Activated naive CD4-positive, alpha-beta T cell treated with anti-CD3 and anti-CD28 coated beads for 36 hours (primary cell): ENCODE measurements at regions of chr12 and their contacts with region 1.

Region 1: GRCh38 chr12:48988030-48988649 is 10.0 kb downstream of the WNT1 start:
- DNase-seq: peak; percentile 84
- H3K4me3 Mint-ChIP-seq: no peak overlapping the region
- H3K27ac Mint-ChIP-seq: no peak overlapping the region
- H3K4me1 Mint-ChIP-seq: no peaks in the 10 kb centered on the region
- H3K27me3 Mint-ChIP-seq: peaks cover 22% of the 10 kb centered on the region

Region 2: DNA sequence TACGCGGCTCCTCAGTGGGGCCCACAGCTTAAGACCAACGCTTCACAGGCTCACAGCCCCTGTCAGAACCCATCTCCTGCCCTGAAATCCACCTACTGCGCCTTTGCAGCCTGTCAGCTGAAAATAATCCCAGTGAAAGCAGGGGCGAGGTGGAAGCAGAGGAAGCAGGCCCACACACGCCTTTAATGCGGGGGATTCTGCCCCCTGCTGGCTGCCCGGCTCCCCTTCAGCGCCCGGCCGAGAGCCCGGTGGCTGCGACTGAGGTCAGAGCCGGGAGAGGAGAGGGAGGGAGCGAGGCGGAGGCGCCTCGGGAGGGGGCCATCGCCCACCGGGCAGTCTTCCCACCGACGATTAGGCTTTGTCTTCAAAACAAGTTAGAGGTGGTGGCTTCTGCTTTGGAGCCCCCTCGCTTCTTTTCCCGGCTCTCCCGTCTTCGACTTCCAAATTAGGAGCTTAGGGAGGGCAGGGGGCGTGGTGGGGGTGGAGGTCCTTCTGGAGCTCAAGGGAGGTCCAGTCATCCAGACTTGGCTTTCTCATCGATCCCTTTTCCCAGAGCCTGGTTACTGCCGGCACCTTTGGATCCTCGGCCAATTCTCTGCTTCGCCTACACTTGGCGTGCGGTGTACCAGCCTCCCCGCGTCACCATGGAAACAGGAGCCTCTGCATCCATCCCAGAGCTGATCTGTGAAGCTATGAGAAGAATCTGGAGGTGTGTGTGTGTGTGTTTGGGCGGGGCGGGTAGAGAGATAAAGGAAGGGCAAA is 97.3 kb before region 1 on chr12:
- CTCF ChIA-PET with region 1: interaction called, 27 read pairs
- intact Hi-C with region 1: no loop called
- DNase-seq: peak; percentile 86
- H3K4me3 Mint-ChIP-seq: peak overlapping the region; percentile 24
- H3K27ac Mint-ChIP-seq: no peak overlapping the region
- H3K4me1 Mint-ChIP-seq: peaks cover 5% of the 10 kb centered on the region
- H3K27me3 Mint-ChIP-seq: peaks cover 13% of the 10 kb centered on the region

Region 3: GRCh38 chr12:48924617-48925303 is 63.4 kb before region 1 on chr12:
- CTCF ChIA-PET with region 1: interaction called, 35 read pairs
- intact Hi-C with region 1: no loop called
- DNase-seq: peak; percentile 81
- H3K4me3 Mint-ChIP-seq: peak overlapping the region; percentile 91
- H3K27ac Mint-ChIP-seq: peak overlapping the region; percentile 96
- H3K4me1 Mint-ChIP-seq: peaks cover 49% of the 10 kb centered on the region
- H3K27me3 Mint-ChIP-seq: no peaks in the 10 kb centered on the region

Region 4: GRCh38 chr12:48946205-48946604 is 41.9 kb before region 1 on chr12:
- CTCF ChIA-PET with region 1: interaction called, 14 read pairs
- intact Hi-C with region 1: no loop called
- DNase-seq: no peak
- H3K4me3 Mint-ChIP-seq: no peak overlapping the region
- H3K27ac Mint-ChIP-seq: no peak overlapping the region
- H3K4me1 Mint-ChIP-seq: peaks cover 10% of the 10 kb centered on the region
- H3K27me3 Mint-ChIP-seq: no peaks in the 10 kb centered on the region

Region 5: GRCh38 chr12:48969833-48970701 is 18.1 kb before region 1 on chr12:
- CTCF ChIA-PET with region 1: interaction called, 37 read pairs
- intact Hi-C with region 1: no loop called
- DNase-seq: peak; percentile 48
- H3K4me3 Mint-ChIP-seq: no peak overlapping the region
- H3K27ac Mint-ChIP-seq: no peak overlapping the region
- H3K4me1 Mint-ChIP-seq: peaks cover 31% of the 10 kb centered on the region
- H3K27me3 Mint-ChIP-seq: peaks cover 42% of the 10 kb centered on the region

Region 6: GRCh38 chr12:49013428-49013827 is 25.3 kb after region 1 on chr12:
- CTCF ChIA-PET with region 1: interaction called, 14 read pairs
- intact Hi-C with region 1: no loop called
- DNase-seq: no peak
- H3K4me3 Mint-ChIP-seq: no peak overlapping the region
- H3K27ac Mint-ChIP-seq: no peak overlapping the region
- H3K4me1 Mint-ChIP-seq: peaks cover 26% of the 10 kb centered on the region
- H3K27me3 Mint-ChIP-seq: no peaks in the 10 kb centered on the region

Region 7: GRCh38 chr12:49121047-49121696 is 133.0 kb after region 1 on chr12:
- CTCF ChIA-PET with region 1: no interaction called
- intact Hi-C with region 1: no loop called
- DNase-seq: peak; percentile 24
- H3K4me3 Mint-ChIP-seq: no peak overlapping the region
- H3K27ac Mint-ChIP-seq: no peak overlapping the region
- H3K4me1 Mint-ChIP-seq: no peaks in the 10 kb centered on the region
- H3K27me3 Mint-ChIP-seq: no peaks in the 10 kb centered on the region